Heart left ventricle (tissue), 16 donors: ENCODE measurements at regions of chr18 and their contacts with region 1.

Region 1: DNA sequence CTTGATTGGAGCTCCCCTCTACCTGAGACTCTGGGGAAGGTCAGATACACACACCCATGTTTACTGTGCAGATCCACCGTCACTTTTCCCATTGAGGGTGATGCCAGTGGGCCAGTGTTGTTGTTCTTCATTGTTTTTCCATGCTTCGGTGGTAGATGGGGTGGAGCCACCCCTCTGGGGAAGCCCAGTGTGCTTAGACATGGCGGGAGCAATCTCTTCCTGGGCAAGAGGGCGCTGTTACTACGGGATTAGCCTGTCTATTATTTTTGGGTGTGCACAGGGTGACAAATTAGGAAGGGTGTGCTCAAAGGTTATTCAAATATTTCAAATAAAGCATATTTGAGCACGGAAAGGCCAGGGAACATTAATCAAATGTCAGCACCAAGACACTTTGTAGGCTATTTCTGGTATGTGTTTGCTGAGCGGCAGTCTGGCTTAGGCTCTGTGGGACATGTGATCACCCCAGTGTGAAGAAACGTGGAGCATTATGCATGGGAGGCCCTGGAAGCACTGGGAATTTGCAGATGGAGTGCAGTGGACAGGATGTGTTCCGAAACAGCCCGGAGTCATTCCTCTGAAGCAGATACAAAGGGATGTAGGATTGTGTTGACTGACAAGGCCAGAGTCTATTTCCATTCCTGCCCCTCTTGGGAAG is 34.8 kb upstream of the SMIM21 start:
- DNase-seq: peak in 1 of 5 donors; percentile 50
- ATAC-seq: peak; percentile 79 to 93 (median 90)
- H3K4me3 ChIP-seq: no peak overlapping the region
- H3K27ac ChIP-seq: peak overlapping the region in 1 of 12 donors; percentile 24
- H3K4me1 ChIP-seq: peaks cover 0 to 13% (median 0%) of the 10 kb centered on the region in 12 donors
- H3K27me3 ChIP-seq: no peaks in the 10 kb centered on the region
- CTCF ChIP-seq: no peak
- POLR2A ChIP-seq: no peak

Region 2: GRCh38 chr18:75173125-75173432 is 289.2 kb before region 1 on chr18:
- intact Hi-C with region 1: loop called in 1 of 10 experiments (anchors 10 kb)
- DNase-seq: no peak
- ATAC-seq: no peak
- H3K4me3 ChIP-seq: no peak overlapping the region
- H3K27ac ChIP-seq: no peak overlapping the region
- H3K4me1 ChIP-seq: peaks cover 0 to 21% (median 7%) of the 10 kb centered on the region in 12 donors
- H3K27me3 ChIP-seq: no peaks in the 10 kb centered on the region
- CTCF ChIP-seq: peak in 6 of 12 donors; percentile 10 to 30 (median 22)
- POLR2A ChIP-seq: no peak

Region 3: GRCh38 chr18:75293591-75293990 is 168.7 kb before region 1 on chr18:
- intact Hi-C with region 1: no loop called
- DNase-seq: no peak
- ATAC-seq: no peak
- H3K4me3 ChIP-seq: no peak overlapping the region
- H3K27ac ChIP-seq: no peak overlapping the region
- H3K4me1 ChIP-seq: no peaks in the 10 kb centered on the region
- H3K27me3 ChIP-seq: no peaks in the 10 kb centered on the region
- CTCF ChIP-seq: no peak
- POLR2A ChIP-seq: no peak

Region 4: GRCh38 chr18:75376004-75376403 is 86.3 kb before region 1 on chr18:
- intact Hi-C with region 1: loop called in 1 of 10 experiments (anchors 10 kb)
- DNase-seq: no peak
- ATAC-seq: no peak
- H3K4me3 ChIP-seq: no peak overlapping the region
- H3K27ac ChIP-seq: no peak overlapping the region
- H3K4me1 ChIP-seq: no peaks in the 10 kb centered on the region
- H3K27me3 ChIP-seq: peaks cover 0 to 2% (median 0%) of the 10 kb centered on the region in 9 donors
- CTCF ChIP-seq: no peak
- POLR2A ChIP-seq: no peak

Region 5: GRCh38 chr18:75735291-75735690 is 273.0 kb after region 1 on chr18:
- intact Hi-C with region 1: no loop called
- DNase-seq: no peak
- ATAC-seq: no peak
- H3K4me3 ChIP-seq: no peak overlapping the region
- H3K27ac ChIP-seq: no peak overlapping the region
- H3K4me1 ChIP-seq: no peaks in the 10 kb centered on the region
- H3K27me3 ChIP-seq: peaks cover 0 to 6% (median 0%) of the 10 kb centered on the region in 9 donors
- CTCF ChIP-seq: no peak
- POLR2A ChIP-seq: no peak